AG04450 (cell line): ENCODE measurements at regions of chr10 and their contacts with region 1.

Region 1: GRCh38 chr10:44932517-44933450 is 21.6 kb downstream of the TMEM72 start:
- DNase-seq: peak; percentile 63
- H3K4me3 ChIP-seq: no peak overlapping the region
- H3K27ac ChIP-seq: no peak overlapping the region
- H3K27me3 ChIP-seq: peaks cover 6% of the 10 kb centered on the region
- CTCF ChIP-seq: peak; percentile 98

Region 2: GRCh38 chr10:44922021-44922420 is 10.8 kb before region 1 on chr10:
- CTCF ChIA-PET with region 1: interaction called, 14 read pairs
- POLR2A ChIA-PET with region 1: no interaction called
- DNase-seq: no peak
- H3K4me3 ChIP-seq: no peak overlapping the region
- H3K27ac ChIP-seq: no peak overlapping the region
- H3K27me3 ChIP-seq: peaks cover 26% of the 10 kb centered on the region
- CTCF ChIP-seq: no peak

Region 3: GRCh38 chr10:44947371-44948152 is 14.8 kb after region 1 on chr10:
- CTCF ChIA-PET with region 1: interaction called, 37 read pairs
- POLR2A ChIA-PET with region 1: no interaction called
- DNase-seq: no peak
- H3K4me3 ChIP-seq: no peak overlapping the region
- H3K27ac ChIP-seq: no peak overlapping the region
- H3K27me3 ChIP-seq: peaks cover 2% of the 10 kb centered on the region
- CTCF ChIP-seq: no peak

Region 4: GRCh38 chr10:44962870-44963738 is 30.3 kb after region 1 on chr10:
- CTCF ChIA-PET with region 1: interaction called, 18 read pairs
- POLR2A ChIA-PET with region 1: no interaction called
- DNase-seq: no peak
- H3K4me3 ChIP-seq: no peak overlapping the region
- H3K27ac ChIP-seq: no peak overlapping the region
- H3K27me3 ChIP-seq: no peaks in the 10 kb centered on the region
- CTCF ChIP-seq: peak; percentile 30

Region 5: DNA sequence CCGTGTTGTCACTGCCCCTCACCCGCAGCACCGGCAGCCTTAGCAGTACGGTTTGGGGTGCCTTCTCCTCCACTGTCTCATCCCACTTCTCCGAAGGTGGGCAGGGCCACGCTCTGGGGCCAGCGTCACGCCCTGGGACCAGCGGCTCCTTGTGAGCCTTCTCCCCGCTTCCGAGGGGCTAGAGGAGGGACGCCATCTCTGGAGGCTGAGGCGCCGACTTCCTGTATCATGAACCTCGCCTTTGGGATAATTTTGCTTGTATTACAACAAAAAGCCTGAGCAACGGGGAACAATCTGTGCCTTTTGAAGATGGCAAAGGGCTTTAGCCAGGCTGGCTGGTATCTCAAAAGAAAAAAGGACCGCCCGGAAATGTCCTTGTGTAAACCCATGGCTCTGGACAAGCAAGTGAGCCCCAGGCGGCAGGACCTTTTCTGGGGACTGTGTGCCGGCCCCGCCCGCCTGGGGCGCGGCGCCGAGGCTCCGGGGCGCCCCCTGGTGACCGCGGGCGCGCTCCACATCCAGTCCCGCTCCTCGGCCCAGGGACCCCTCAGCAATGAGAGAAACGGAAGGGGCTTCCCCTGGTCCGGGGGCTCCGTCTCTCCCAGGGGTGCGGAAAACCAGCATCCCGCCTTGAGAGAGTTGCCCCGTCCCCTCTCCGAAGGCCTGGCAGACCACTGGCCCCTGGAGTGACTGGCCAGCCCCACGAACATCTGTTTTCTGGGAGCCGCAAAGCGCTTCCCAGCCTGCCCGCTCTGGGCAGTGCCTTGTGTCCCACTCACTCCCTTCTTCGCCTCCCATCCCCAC is 42.0 kb after region 1 on chr10:
- CTCF ChIA-PET with region 1: interaction called, 10 read pairs
- POLR2A ChIA-PET with region 1: interaction called, 3 read pairs
- DNase-seq: no peak
- H3K4me3 ChIP-seq: peak overlapping the region; percentile 50
- H3K27ac ChIP-seq: peak overlapping the region; percentile 78
- H3K27me3 ChIP-seq: no peaks in the 10 kb centered on the region
- CTCF ChIP-seq: peak; percentile 77

Region 6: GRCh38 chr10:45000752-45001380 is 68.1 kb after region 1 on chr10 and contains the start of gene ZNF22:
- CTCF ChIA-PET with region 1: interaction called, 25 read pairs
- POLR2A ChIA-PET with region 1: no interaction called
- DNase-seq: no peak
- H3K4me3 ChIP-seq: peak within 1 kb of the TSS; percentile 57
- H3K27ac ChIP-seq: peak within 1 kb of the TSS; percentile 85
- H3K27me3 ChIP-seq: no peaks in the 10 kb centered on the region
- CTCF ChIP-seq: peak; percentile 18; the same call in 1 of the 2 replicates
- polyA plus RNA-seq, gene ZNF22: 17.4 and 23.4 TPM in 2 replicates